Panc1 (cell line): ENCODE measurements at regions of chr12 and their contacts with region 1.

Region 1: GRCh38 chr12:87120390-87121104 is 864.4 kb upstream of the MGAT4C start:
- DNase-seq: no peak
- ATAC-seq: no peak
- H3K4me3 ChIP-seq: no peak overlapping the region
- H3K27ac ChIP-seq: no peak overlapping the region; the same call in 1 of the 2 replicates
- H3K4me1 ChIP-seq: no peaks in the 10 kb centered on the region
- H3K27me3 ChIP-seq: no peaks in the 10 kb centered on the region
- CTCF ChIP-seq: no peak

Region 2: GRCh38 chr12:86985298-86985697 is 135.2 kb before region 1 on chr12:
- CTCF ChIA-PET with region 1: no interaction called
- POLR2A ChIA-PET with region 1: no interaction called
- in situ Hi-C with region 1: no loop called
- intact Hi-C with region 1: no loop called
- DNase-seq: no peak
- ATAC-seq: no peak
- H3K4me3 ChIP-seq: no peak overlapping the region
- H3K27ac ChIP-seq: no peak overlapping the region
- H3K4me1 ChIP-seq: no peaks in the 10 kb centered on the region
- H3K27me3 ChIP-seq: no peaks in the 10 kb centered on the region
- CTCF ChIP-seq: no peak

Region 3: GRCh38 chr12:87157791-87158190 is 37.2 kb after region 1 on chr12:
- CTCF ChIA-PET with region 1: no interaction called
- POLR2A ChIA-PET with region 1: no interaction called
- in situ Hi-C with region 1: no loop called
- intact Hi-C with region 1: loop called (anchors 2 kb)
- DNase-seq: no peak
- ATAC-seq: peak; percentile 75
- H3K4me3 ChIP-seq: no peak overlapping the region
- H3K27ac ChIP-seq: no peak overlapping the region
- H3K4me1 ChIP-seq: peaks cover 4% of the 10 kb centered on the region; the same call in 1 of the 2 replicates
- H3K27me3 ChIP-seq: no peaks in the 10 kb centered on the region
- CTCF ChIP-seq: no peak

Region 4: DNA sequence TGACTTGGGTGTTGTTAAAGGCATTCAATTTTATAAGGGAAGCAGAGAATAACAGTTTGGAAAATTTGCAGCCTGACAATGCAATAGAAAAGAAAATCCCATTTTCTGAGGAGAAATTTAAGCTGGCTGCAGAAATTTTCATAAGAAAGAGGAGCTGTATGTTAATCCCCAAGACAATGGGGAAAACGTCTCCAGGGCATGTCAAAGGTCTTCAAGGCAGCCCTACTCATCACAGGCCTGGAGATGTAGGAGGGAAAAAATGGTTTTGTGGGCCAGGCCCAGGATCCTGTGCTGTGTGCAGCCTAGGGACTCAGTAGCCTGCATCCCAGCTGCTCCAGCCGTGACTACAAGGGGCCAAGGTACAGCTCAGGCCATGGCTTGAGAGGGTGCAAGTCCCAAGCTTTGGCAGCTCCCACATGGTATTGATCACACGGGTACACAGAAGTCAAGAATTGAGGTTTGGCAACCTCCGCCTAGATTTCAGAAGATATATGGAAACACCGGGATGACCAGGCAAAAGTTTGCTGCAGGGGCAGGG is 62.2 kb after region 1 on chr12:
- CTCF ChIA-PET with region 1: no interaction called
- POLR2A ChIA-PET with region 1: no interaction called
- in situ Hi-C with region 1: no loop called
- intact Hi-C with region 1: no loop called
- DNase-seq: no peak
- ATAC-seq: no peak
- H3K4me3 ChIP-seq: no peak overlapping the region
- H3K27ac ChIP-seq: no peak overlapping the region
- H3K4me1 ChIP-seq: no peaks in the 10 kb centered on the region
- H3K27me3 ChIP-seq: no peaks in the 10 kb centered on the region
- CTCF ChIP-seq: no peak